Activated B cell treated with CpG ODN at 0.5 μM for 24 hours (primary cell): ENCODE measurements at regions of chr9 and their contacts with region 1.

Region 1: DNA sequence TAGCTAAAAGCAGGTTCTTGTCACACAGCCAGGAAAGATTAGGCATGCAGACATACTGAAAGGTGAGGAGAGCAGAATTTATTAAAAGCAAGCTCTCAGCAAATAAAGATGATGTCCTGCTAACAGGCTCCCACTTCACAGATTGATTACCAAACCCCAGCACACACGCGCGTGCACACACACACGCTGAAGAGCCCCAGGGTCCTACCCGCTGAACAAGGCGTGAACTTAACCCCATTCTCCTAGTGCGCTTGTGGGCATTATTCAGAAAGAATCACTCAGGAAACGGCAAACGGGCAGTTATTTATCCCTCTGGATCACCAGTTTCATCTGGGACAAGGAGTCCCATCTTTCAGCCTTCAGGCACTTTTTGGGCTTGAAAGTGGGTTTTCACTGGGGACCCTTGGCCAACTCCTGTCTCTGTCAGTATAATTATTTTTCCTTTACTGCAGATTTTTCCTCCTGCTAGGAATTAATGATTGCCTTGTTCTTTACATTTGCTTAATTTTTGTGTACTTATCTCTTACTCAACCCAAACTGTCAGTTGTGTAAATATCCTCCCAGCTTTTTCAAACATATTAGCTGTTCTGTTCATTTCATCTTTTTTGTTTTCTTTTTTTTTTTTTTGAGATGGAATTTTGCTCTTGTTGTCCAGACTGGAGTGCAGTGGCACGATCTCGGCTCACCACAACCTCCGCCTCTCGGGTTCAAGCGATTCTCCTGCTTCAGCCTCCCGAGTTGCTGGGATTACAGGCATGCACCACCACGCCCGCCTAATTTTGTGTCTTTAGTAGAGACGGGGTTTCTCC is 92.6 kb downstream of the RIC1 start:
- DNase-seq: no peak
- ATAC-seq: no peak
- H3K4me3 Mint-ChIP-seq: no peak overlapping the region
- H3K27ac Mint-ChIP-seq: no peak overlapping the region
- H3K4me1 Mint-ChIP-seq: peaks cover 7% of the 10 kb centered on the region
- H3K27me3 Mint-ChIP-seq: no peaks in the 10 kb centered on the region
- CTCF ChIP-seq: no peak

Region 2: DNA sequence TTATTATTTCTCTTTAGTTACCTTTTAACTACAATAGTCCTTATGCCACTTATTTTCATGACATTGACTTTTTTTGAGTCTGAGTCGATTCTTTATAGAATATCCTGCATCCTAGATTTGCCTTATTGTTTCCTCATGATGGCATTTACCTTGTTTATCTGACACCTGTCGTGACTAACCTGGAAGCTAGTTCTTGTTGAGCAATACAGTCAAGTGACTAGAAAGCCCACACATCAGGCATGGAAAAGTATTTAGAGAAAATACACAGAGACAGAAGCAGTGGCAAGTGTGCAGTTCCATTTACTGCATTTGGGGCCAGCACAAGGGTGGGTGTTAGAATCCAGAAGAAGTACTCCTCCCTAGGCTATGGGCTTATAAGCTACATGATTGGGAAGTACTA is 13.6 kb after region 1 on chr9:
- CTCF ChIA-PET with region 1: no interaction called
- POLR2A ChIA-PET with region 1: no interaction called
- intact Hi-C with region 1: no loop called
- DNase-seq: no peak
- ATAC-seq: no peak
- H3K4me3 Mint-ChIP-seq: no peak overlapping the region
- H3K27ac Mint-ChIP-seq: no peak overlapping the region
- H3K4me1 Mint-ChIP-seq: no peaks in the 10 kb centered on the region
- H3K27me3 Mint-ChIP-seq: no peaks in the 10 kb centered on the region
- CTCF ChIP-seq: no peak

Region 3: DNA sequence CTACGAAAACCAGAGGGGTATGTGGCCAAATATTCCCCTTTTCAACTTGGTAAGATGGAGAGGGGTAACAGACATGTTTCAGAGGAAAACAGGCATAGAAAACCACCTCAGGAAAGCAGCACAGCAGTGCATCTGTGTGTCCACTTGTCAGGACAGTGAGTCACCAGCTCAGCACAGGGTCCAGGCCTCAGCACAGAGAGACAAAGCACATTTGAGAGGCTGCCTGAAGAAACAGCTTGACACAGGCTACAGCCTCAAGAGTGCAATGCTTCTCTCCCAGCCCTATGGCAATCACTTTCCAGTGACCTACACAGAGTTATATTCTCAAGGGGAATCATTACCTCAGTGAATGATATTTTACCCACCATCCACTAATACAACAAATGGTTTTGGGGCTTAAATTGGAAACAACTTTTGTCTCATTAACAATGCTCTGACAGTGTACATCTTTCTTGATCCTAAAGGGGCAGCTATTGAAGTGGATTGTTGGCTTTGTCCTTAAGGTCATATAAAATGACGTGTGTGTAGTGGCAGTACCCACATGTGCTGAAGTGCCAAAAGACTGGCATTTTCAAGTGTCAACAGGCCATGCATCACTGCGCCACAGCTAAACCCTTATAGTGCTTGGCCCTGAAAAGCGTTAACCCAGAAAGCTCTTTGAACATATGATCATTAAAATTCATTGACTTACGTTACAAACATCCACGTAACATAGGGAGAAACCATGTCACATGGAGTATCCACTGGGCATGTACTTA is 65.1 kb after region 1 on chr9:
- CTCF ChIA-PET with region 1: no interaction called
- POLR2A ChIA-PET with region 1: no interaction called
- intact Hi-C with region 1: loop called (anchors 10 kb)
- DNase-seq: no peak
- ATAC-seq: no peak
- H3K4me3 Mint-ChIP-seq: no peak overlapping the region
- H3K27ac Mint-ChIP-seq: no peak overlapping the region
- H3K4me1 Mint-ChIP-seq: peaks cover 11% of the 10 kb centered on the region
- H3K27me3 Mint-ChIP-seq: no peaks in the 10 kb centered on the region
- CTCF ChIP-seq: no peak